AG04450 (cell line): ENCODE measurements at regions of chr19 and their contacts with region 1.

Region 1: DNA sequence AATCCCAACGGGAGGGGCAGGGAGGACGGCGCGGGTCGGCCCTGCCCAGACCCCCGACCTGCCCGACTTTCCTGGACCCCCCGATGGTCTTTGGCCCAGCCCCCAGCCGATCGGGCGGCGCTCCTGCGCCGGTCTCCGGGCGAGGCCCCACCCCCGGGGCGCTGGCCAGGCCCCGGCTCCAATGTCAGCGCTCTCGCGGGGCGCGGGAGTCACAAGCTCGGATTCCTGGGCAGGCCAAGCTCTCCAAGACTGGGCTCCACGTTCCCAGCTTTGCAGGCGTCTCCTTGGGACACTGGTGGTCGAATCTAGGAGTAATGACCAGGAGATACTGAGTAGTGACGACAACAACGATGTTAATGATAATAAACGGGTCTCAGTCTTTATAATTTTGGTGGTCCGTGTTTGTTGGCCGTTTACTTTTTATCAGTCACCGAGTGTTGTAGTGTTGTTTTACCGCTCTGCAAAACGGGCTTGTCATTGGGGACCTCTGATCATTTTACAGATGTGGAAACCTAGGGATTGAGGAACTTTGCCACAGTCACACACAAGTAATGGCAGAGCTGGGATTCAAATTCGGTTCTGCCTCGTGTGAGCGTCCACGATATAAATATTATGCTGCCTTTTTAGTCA is 545 bp downstream of the RAD23A start:
- DNase-seq: peak; percentile 48
- H3K4me3 ChIP-seq: peak overlapping the region; percentile 82
- H3K27ac ChIP-seq: peak overlapping the region; percentile 93
- H3K27me3 ChIP-seq: no peaks in the 10 kb centered on the region
- CTCF ChIP-seq: no peak

Region 2: GRCh38 chr19:13033819-13034611 is 87.8 kb after region 1 on chr19:
- CTCF ChIA-PET with region 1: no interaction called
- POLR2A ChIA-PET with region 1: no interaction called
- DNase-seq: no peak
- H3K4me3 ChIP-seq: no peak overlapping the region
- H3K27ac ChIP-seq: peak overlapping the region; percentile 21
- H3K27me3 ChIP-seq: no peaks in the 10 kb centered on the region
- CTCF ChIP-seq: peak; percentile 78

Region 3: GRCh38 chr19:14383661-14384555 is 1437.7 kb after region 1 on chr19:
- CTCF ChIA-PET with region 1: no interaction called
- POLR2A ChIA-PET with region 1: interaction called, 10 read pairs
- DNase-seq: no peak
- H3K4me3 ChIP-seq: peak overlapping the region; percentile 31
- H3K27ac ChIP-seq: peak overlapping the region; percentile 53
- H3K27me3 ChIP-seq: no peaks in the 10 kb centered on the region
- CTCF ChIP-seq: peak; percentile 34; the same call in 1 of the 2 replicates